ENCODE measurements at regions of chr5 and their contacts with region 1.

Region 1: DNA sequence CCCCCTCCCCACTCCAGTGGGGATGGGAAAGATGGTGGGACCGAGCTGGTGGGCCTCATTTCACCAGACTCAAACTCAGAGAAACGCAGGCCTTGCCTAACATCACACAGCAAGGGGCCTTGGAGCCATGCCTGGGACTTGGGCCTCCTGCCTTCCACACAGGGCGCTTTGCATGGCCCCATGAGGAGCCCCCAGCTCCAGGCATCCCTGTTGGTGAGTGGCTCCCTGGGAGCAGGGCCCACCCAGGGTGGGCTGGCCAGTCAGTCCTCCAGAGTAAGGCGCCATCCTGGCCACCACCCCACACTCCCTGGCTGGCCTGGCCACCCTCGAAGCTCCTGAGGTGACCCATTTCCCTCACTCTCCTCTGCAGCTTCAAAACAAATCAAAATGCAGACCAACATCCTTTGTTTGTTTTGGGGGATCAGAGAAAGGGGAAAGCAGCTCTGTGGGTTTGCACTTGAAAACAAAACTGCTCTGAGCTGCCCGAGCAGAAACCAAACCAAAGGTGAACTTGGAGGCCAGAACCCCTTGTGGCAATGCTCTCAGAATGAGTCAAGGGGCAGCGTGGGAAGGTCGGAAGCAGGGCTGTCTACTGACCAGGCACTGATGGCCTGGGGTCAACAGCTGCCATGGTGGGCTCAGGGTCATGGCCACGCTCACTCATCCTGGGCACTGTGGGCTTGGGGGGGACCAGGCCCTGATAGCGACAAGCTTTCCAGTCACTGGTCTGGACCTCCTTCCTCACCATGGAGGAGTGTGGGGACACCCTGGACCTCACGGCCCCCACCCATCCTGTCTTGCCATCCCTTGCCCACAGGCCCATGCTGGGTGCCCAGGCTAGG is 37.0 kb upstream of the VDAC1 start:
- DNase-seq: no peak
- H3K4me3 Mint-ChIP-seq: no peak overlapping the region
- H3K27ac Mint-ChIP-seq: no peak overlapping the region
- H3K4me1 Mint-ChIP-seq: peaks cover 11% of the 10 kb centered on the region
- H3K27me3 Mint-ChIP-seq: no peaks in the 10 kb centered on the region
- CTCF ChIP-seq: no peak

Region 2: DNA sequence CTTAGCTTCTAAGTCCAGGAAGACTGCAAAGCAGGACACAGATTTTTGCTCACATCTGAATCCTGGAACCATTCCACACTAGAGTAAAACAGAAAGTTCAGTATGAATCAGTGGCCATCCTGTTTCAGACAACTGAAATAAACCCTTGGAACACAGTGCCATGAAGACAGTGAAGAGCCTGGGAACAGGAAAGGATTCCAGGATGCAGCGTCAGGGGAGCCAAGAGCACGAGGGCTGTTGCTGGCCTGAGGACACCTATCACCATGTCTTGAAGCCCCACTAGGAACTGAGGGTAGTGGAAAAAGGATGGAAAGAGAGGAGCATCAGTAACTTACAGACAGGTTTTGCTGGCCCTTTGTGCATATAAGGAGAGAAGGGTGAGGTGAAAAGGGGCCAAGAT is 314.2 kb before region 1 on chr5:
- CTCF ChIA-PET with region 1: no interaction called
- POLR2A ChIA-PET with region 1: no interaction called
- intact Hi-C with region 1: no loop called
- DNase-seq: no peak
- H3K4me3 Mint-ChIP-seq: no peak overlapping the region
- H3K27ac Mint-ChIP-seq: no peak overlapping the region
- H3K4me1 Mint-ChIP-seq: no peaks in the 10 kb centered on the region
- H3K27me3 Mint-ChIP-seq: peaks cover 28% of the 10 kb centered on the region
- CTCF ChIP-seq: no peak

Region 3: DNA sequence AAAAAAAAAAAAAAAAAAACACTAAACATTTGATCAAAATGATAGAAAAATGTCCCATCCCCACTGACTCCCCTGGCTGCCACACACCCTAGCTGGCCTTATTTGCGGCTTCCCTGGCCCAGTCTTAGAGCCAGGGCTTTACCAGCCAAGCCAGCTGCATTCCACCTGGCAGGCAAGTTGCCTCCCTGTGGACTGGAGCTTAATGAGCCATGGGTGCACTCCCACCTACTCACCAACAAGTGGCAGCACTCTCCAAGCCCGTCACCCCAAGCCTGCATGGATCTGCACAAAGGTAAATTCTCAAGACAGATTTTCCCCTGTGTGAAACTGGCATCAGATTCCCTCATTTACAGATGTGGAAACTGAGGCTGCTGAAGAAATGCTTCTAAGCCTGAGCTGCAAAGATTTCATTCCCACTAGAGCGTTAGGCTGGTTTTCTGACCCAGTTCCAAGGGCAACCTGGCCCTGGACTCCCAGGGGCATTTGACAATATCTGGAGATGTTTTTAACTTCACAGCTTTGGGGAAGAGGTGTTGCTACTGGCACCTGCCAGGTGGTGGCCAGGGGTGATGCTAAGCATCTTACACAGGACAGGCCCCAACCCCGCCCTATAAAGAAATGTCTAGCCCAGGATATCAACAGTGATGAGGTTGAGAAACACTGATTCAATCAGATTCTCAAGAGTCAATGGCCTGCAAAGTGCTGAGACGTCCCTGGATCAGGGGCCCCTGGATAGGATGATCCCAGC is 15.1 kb before region 1 on chr5:
- CTCF ChIA-PET with region 1: interaction called, 33 read pairs
- POLR2A ChIA-PET with region 1: interaction called, 3 read pairs
- intact Hi-C with region 1: no loop called
- DNase-seq: peak; percentile 86
- H3K4me3 Mint-ChIP-seq: no peak overlapping the region
- H3K27ac Mint-ChIP-seq: no peak overlapping the region
- H3K4me1 Mint-ChIP-seq: peaks cover 20% of the 10 kb centered on the region
- H3K27me3 Mint-ChIP-seq: no peaks in the 10 kb centered on the region
- CTCF ChIP-seq: peak; percentile 45

Region 4: DNA sequence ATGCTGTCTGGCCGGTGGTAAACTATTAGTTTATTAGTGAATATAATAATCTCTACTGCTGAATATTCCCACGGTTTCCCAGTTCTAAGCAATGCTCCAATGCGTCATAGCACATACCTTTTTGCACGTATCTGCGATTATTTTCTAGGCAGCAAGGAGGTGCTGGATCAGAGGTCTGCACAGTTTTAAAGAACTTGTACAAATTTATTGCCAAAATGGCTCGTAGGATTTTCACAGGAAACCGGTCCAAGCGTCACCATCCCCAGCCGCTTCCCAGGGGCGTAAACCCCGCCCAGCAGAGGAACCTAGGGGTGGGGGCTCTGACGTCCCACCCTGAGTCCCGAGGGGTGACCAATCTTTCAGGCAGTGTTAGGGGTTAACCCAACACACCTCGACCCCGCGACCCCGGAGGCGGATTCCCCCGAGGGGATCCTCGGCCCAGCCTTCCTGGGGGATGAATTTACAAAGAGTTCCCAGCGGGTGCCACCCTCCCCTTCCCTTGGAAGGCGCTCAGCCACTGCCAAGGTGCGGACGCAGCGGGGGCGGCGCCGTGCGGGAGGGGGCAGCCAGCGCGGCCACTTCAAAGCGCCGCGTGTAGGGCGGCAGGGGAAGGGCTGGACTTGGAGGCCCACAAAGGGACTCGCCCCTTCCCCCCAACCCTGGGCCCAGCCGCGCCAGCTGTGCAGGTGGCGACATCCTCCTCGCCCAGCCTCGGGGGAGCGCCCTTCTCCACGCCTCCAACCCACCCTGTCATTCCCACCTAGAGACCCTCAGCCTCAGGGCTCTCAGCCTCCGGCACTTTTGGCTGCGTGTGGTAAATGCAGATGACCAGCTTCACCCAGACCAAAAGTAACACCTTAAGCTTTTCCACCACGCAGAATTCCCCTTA is 29.2 kb after region 1 on chr5:
- CTCF ChIA-PET with region 1: interaction called, 29 read pairs
- POLR2A ChIA-PET with region 1: interaction called, 5 read pairs
- intact Hi-C with region 1: no loop called
- DNase-seq: no peak
- H3K4me3 Mint-ChIP-seq: no peak overlapping the region
- H3K27ac Mint-ChIP-seq: no peak overlapping the region
- H3K4me1 Mint-ChIP-seq: no peaks in the 10 kb centered on the region
- H3K27me3 Mint-ChIP-seq: no peaks in the 10 kb centered on the region
- CTCF ChIP-seq: no peak

Region 5: DNA sequence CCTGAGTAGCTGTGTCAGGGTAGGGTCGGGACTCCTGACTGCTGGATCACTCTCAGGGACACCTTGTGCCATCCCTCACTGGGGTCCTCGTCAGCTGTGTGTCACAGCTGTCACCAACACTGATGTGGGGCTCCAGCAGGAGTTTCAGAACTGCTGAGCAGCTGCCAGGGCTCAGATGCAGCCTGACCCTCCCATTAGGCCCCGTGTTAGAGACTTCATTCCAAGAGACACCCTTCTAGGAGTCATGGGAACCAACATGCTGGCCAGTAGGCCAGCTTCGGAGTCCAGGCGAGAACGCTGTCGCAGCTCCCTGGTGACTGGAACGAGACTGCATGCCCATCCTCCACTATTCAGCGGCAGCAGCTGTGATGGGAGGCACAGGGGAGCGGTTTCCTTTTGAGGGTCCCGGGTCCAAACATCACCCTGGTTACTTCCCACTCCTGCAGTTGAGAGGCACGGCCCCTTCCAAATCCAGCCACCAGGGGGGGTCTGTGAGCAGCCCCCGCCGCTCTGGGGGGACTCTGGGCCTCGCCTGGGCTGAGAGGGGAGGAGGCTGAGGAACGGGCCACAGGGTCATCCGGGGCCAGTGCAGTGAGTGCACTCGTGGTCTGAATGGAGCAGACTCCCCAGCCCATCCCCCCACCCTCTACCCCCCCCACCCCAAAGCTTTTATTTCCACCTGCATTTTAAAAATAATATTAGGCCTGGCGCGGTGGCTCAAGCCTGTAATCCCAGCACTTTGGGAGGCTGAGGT is 60.1 kb after region 1 on chr5:
- CTCF ChIA-PET with region 1: no interaction called
- POLR2A ChIA-PET with region 1: interaction called, 4 read pairs
- intact Hi-C with region 1: loop called (anchors 1 kb)
- DNase-seq: peak; percentile 67
- H3K4me3 Mint-ChIP-seq: no peak overlapping the region
- H3K27ac Mint-ChIP-seq: no peak overlapping the region
- H3K4me1 Mint-ChIP-seq: peaks cover 7% of the 10 kb centered on the region
- H3K27me3 Mint-ChIP-seq: no peaks in the 10 kb centered on the region
- CTCF ChIP-seq: peak; percentile 99

Region 6: DNA sequence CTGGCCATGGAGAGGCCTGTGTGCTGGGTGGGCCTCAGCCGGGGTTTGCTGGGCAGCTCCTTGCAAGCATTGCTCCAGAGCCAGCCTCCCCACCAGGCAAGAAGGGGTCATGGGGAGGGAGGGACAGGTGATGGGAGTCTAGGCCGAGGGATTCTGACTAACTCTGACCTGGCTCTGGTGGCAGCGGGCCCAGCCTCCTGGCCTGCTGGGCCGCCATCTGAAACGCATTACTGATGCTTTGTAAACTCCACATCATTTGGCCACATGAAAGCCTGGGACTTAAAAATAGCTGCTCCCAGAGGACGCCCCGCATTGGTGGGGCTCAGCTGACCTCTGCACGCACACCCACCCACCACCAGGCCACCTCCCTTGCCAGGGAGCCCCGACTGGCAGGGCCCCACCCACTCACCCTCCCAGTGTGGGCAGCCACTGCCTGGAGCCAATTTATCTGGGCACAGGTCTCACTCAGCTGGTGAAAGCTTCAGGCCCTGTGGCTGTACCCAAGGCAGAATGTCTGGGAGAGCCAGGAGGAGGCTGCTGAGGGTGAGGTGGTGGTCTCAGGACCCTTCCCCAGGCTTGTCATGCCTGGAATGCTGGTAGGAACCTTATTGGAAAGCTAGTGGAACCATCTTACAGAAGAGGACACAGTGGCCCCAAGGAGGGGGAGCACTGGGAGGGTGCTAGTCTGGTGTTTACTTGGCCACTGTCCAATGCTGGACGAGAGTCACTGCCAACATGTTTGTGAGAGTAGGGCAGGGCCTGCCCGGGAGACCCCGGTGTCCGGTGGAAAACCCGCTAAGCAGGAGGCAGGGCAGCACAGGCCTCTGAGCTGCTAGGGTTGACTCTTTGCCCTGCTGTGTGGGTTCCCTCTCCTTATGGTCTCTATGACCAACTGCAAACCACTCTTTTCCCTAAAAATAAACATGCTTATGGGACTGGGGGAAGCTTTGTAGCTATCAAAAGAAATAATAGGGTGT is 83.5 kb after region 1 on chr5:
- CTCF ChIA-PET with region 1: interaction called, 47 read pairs
- POLR2A ChIA-PET with region 1: interaction called, 11 read pairs
- intact Hi-C with region 1: no loop called
- DNase-seq: peak; percentile 92
- H3K4me3 Mint-ChIP-seq: no peak overlapping the region
- H3K27ac Mint-ChIP-seq: peak overlapping the region; percentile 8
- H3K4me1 Mint-ChIP-seq: peaks cover 18% of the 10 kb centered on the region
- H3K27me3 Mint-ChIP-seq: no peaks in the 10 kb centered on the region
- CTCF ChIP-seq: no peak

Region 7: GRCh38 chr5:134153657-134154056 is 111.9 kb after region 1 on chr5:
- CTCF ChIA-PET with region 1: interaction called, 867 read pairs
- POLR2A ChIA-PET with region 1: interaction called, 8 read pairs
- intact Hi-C with region 1: no loop called
- DNase-seq: no peak
- H3K4me3 Mint-ChIP-seq: no peak overlapping the region
- H3K27ac Mint-ChIP-seq: peak overlapping the region; percentile 13
- H3K4me1 Mint-ChIP-seq: peaks cover 26% of the 10 kb centered on the region
- H3K27me3 Mint-ChIP-seq: no peaks in the 10 kb centered on the region
- CTCF ChIP-seq: no peak

Region 8: DNA sequence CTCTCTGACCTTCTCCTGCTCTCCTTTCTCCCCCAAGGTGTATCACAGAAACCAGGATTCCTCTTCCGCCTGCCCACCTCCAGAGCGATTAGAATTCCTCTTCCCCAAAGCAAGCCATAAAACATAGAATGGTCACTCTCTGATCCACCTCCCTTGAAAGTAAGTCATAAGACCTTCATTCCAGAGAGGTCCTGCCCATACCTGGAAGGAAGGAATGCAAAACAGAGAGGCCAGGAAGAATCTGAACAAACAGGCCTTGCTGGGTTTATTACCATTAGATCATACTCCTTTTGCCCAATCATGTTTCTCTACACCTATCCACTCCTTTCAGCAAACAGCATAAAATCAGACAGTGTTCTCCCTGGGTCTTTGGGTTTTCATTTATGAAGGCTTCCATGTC is 304.2 kb after region 1 on chr5:
- CTCF ChIA-PET with region 1: no interaction called
- POLR2A ChIA-PET with region 1: no interaction called
- intact Hi-C with region 1: no loop called
- DNase-seq: no peak
- H3K4me3 Mint-ChIP-seq: no peak overlapping the region
- H3K27ac Mint-ChIP-seq: no peak overlapping the region
- H3K4me1 Mint-ChIP-seq: peaks cover 6% of the 10 kb centered on the region
- H3K27me3 Mint-ChIP-seq: no peaks in the 10 kb centered on the region
- CTCF ChIP-seq: no peak